ENCODE measurements at regions of chr7 and their contacts with region 1.

Region 1: GRCh38 chr7:10939911-10940703 is 33.6 kb upstream of the PHF14 start:
- DNase-seq: peak; percentile 70 to 97 (median 85)
- ATAC-seq: peak; percentile 83
- H3K4me3 ChIP-seq: peak overlapping the region; percentile 96
- H3K4me3 Mint-ChIP-seq: no peak overlapping the region
- H3K27ac ChIP-seq: peak overlapping the region; percentile 79 to 98
- H3K27ac Mint-ChIP-seq: no peak overlapping the region
- H3K4me1 ChIP-seq: peaks cover 10% of the 10 kb centered on the region
- H3K4me1 Mint-ChIP-seq: peaks cover 21% of the 10 kb centered on the region
- H3K27me3 ChIP-seq: no peaks in the 10 kb centered on the region
- H3K27me3 Mint-ChIP-seq: no peaks in the 10 kb centered on the region
- CTCF ChIP-seq: no peak

Region 2: DNA sequence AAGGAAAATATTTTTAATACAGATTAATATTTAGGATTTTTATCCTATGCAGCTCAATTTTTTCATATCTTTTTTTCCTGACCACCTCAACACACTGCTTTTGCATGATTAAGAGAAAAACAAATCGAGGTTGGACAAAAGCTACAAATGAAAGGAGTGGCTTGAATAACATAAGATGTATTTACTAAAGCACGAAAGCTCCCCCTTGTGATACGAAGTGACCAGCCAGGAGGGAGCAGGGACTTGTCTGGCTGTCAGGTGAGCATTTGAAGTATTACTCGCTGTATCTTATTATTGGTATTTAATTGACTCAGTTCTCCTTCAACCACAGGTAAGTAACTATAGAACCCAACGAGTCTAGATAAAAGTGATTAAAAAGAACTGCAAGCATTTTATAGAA is 231.7 kb before region 1 on chr7:
- CTCF ChIA-PET with region 1: no interaction called
- POLR2A ChIA-PET with region 1: no interaction called
- intact Hi-C with region 1: no loop called
- DNase-seq: peak in 2 of 14 experiments; percentile 1 to 4
- ATAC-seq: no peak
- H3K4me3 ChIP-seq: no peak overlapping the region
- H3K4me3 Mint-ChIP-seq: no peak overlapping the region
- H3K27ac ChIP-seq: no peak overlapping the region
- H3K27ac Mint-ChIP-seq: no peak overlapping the region
- H3K4me1 ChIP-seq: no peaks in the 10 kb centered on the region
- H3K4me1 Mint-ChIP-seq: no peaks in the 10 kb centered on the region
- H3K27me3 ChIP-seq: no peaks in the 10 kb centered on the region
- H3K27me3 Mint-ChIP-seq: no peaks in the 10 kb centered on the region
- CTCF ChIP-seq: no peak

Region 3: GRCh38 chr7:10973061-10973944 is 33.2 kb after region 1 on chr7 and contains the start of gene PHF14:
- CTCF ChIA-PET with region 1: interaction called, 4 read pairs
- POLR2A ChIA-PET with region 1: interaction called, 141 read pairs
- intact Hi-C with region 1: loop called (anchors 1 kb)
- DNase-seq: peak; percentile 89 to 98 (median 94)
- ATAC-seq: peak; percentile 96
- H3K4me3 ChIP-seq: peak within 1 kb of the TSS; percentile 80
- H3K4me3 Mint-ChIP-seq: peak within 1 kb of the TSS; percentile 98
- H3K27ac ChIP-seq: peak within 1 kb of the TSS; percentile 64 to 66
- H3K27ac Mint-ChIP-seq: peak within 1 kb of the TSS; percentile 82
- H3K4me1 ChIP-seq: peaks cover 18% of the 10 kb centered on the region
- H3K4me1 Mint-ChIP-seq: peaks cover 52% of the 10 kb centered on the region
- H3K27me3 ChIP-seq: peaks cover 0 to 9% of the 10 kb centered on the region in 2 experiments
- H3K27me3 Mint-ChIP-seq: peaks cover 10% of the 10 kb centered on the region
- CTCF ChIP-seq: no peak
- total RNA-seq, gene PHF14: 23.1 TPM

Region 4: DNA sequence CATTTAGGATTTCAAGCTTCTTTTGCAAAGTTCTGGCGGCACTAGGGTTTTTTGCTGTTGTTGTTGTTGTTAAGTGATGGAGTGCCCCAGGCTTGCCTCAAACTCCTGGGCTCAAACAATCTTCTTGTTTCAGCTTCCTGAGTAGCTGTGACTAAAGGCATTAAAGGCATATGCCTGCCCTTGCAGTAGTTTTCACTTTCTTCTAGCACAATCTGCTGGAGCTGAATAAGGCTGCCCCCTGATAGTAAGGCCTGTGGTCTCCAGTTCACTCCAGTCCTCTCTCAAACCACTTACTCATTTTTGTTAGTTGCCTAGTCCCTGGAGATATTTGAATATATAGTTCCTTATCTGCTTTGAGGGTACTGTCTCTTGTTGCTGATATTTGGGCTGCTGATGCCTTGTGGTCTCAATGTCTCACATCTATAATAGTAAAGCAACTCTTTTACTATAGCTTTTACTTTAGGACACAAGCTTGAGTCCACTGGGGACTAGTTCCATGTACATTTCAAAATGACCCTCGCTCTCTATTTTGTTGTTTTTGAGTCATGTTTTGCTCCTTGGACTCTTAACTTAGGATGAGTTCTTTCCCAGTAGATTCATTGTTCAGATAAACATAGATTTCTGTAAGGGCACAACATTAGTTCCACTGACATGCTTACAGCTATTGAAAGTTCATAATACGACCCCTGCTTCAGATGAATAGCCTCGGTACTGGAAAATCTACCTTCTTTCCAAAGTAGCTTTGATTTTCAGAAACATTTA is 59.1 kb after region 1 on chr7:
- CTCF ChIA-PET with region 1: interaction called, 3 read pairs
- POLR2A ChIA-PET with region 1: interaction called, 17 read pairs
- intact Hi-C with region 1: no loop called
- DNase-seq: no peak
- ATAC-seq: no peak
- H3K4me3 ChIP-seq: no peak overlapping the region
- H3K4me3 Mint-ChIP-seq: no peak overlapping the region
- H3K27ac ChIP-seq: no peak overlapping the region
- H3K27ac Mint-ChIP-seq: peak overlapping the region; percentile 72
- H3K4me1 ChIP-seq: no peaks in the 10 kb centered on the region
- H3K4me1 Mint-ChIP-seq: peaks cover 61% of the 10 kb centered on the region
- H3K27me3 ChIP-seq: no peaks in the 10 kb centered on the region
- H3K27me3 Mint-ChIP-seq: no peaks in the 10 kb centered on the region
- CTCF ChIP-seq: no peak

Measured in CD4-positive, alpha-beta T cell (primary cell).